ENCODE measurements at regions of chr1 and their contacts with region 1.

Region 1: DNA sequence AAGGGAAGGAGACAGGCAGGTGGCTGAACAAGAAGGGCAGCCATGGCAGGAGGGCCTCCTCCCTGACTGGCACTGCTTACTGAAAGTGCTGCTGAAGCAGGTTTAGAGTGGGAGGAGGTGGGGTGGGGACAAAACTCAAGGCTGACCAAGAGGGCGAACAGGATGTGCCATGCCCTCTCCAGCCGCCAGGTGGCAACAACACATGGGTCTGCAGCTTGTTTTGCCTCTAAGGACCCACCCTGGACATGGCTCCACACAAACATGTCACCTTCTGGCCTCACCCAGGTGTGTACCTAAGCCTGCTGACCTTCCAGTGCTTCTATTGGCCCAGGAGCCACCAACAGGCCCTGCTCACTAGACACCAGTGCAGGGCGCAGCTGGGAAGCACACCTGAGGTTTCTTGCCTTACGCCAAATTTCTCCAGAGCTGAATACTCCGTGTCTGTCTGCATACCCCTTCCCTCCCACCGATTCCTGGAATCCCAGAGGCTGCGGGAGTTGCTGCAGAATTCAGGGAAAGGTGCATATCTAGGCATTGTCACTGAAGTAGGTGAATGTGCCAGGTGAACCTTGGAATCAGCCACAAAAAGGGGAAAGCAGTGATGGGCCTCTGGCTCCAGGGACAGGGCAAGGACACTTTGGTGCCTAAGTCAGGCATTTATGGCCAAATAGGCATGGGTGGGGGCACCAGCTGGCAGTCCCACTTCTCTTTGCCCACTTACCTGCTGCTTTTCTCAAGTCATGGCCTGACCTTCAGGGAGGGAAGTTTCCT is 5.3 kb downstream of the PSRC1 start:
- DNase-seq: peak; percentile 64 to 76
- ATAC-seq: peak; percentile 16 to 60; a peak in 3 of 6 replicates
- H3K4me3 ChIP-seq: no peak overlapping the region
- H3K27ac ChIP-seq: peak overlapping the region; percentile 95 to 99
- H3K4me1 ChIP-seq: peaks cover 57% of the 10 kb centered on the region
- CTCF ChIP-seq: peak; percentile 69
- EP300 ChIP-seq: no peak
- POLR2A ChIP-seq: no peak
- RAD21 ChIP-seq: peak; percentile 56 to 67

Region 2: GRCh38 chr1:109025694-109026093 is 251.9 kb before region 1 on chr1:
- CTCF ChIA-PET with region 1: no interaction called
- POLR2A ChIA-PET with region 1: no interaction called
- DNase-seq: no peak
- ATAC-seq: no peak
- H3K4me3 ChIP-seq: no peak overlapping the region
- H3K27ac ChIP-seq: no peak overlapping the region
- H3K4me1 ChIP-seq: no peaks in the 10 kb centered on the region
- CTCF ChIP-seq: no peak
- EP300 ChIP-seq: no peak
- POLR2A ChIP-seq: no peak
- RAD21 ChIP-seq: no peak

Region 3: DNA sequence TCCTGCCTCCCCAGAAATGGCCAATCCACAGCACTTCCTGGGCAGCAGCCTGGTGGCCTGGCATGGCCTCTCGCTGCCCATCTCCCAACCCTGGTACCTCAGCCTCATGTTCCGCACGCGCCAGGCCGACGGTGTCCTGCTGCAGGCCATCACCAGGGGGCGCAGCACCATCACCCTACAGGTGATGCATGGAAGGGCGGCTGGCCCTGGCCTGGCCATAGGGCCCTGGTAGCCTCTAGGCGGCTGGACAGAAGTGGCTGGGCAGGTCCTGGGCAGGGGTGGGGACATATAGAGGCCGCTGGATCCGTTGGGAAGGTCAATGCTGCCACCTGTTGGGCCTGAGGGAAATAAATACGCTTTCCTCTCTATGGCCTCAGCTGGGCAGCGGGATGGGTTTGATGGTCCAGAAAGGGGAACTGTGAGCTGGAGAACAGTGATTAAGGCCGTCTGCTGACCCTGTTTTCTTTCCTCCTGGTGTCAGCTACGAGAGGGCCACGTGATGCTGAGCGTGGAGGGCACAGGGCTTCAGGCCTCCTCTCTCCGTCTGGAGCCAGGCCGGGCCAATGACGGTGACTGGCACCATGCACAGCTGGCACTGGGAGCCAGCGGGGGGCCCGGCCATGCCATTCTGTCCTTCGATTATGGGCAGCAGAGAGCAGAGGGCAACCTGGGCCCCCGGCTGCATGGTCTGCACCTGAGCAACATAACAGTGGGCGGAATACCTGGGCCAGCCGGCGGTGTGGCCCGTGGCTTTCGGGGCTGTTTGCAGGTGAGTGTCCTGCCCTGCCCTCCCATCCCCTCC is 13.8 kb before region 1 on chr1:
- CTCF ChIA-PET with region 1: interaction called, 31 read pairs
- POLR2A ChIA-PET with region 1: no interaction called
- DNase-seq: peak; percentile 85 to 95
- ATAC-seq: peak; percentile 92 to 99
- H3K4me3 ChIP-seq: no peak overlapping the region
- H3K27ac ChIP-seq: peak overlapping the region in 1 of 2 experiments; percentile 57; a peak in 2 of 6 replicates
- H3K4me1 ChIP-seq: no peaks in the 10 kb centered on the region; the same call in 2 of the 3 replicates
- CTCF ChIP-seq: peak; percentile 89
- EP300 ChIP-seq: no peak
- POLR2A ChIP-seq: no peak
- RAD21 ChIP-seq: peak; percentile 89 to 94

Region 4: DNA sequence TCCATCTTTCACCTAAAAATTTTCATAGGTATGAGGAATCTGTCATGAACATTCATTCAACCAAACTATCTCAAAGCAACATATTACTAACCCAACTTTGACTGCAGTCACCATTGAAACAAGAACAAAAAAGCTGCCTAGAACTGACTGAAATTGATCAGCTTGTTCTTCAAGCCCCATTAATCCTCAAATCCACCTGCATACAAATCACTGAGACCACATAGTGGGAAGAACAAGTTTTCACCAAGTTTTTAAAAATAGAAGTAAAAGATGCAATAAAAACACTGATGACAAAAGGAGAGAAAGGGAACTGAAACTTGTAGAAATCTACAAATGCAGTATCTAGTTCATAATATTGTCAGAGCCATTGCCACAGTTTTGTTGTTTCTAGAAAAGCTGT is 114.0 kb after region 1 on chr1:
- CTCF ChIA-PET with region 1: interaction called, 107 read pairs
- POLR2A ChIA-PET with region 1: interaction called, 3 read pairs
- DNase-seq: no peak
- ATAC-seq: no peak
- H3K4me3 ChIP-seq: no peak overlapping the region
- H3K27ac ChIP-seq: no peak overlapping the region
- H3K4me1 ChIP-seq: peaks cover 23% of the 10 kb centered on the region; the same call in 2 of the 3 replicates
- CTCF ChIP-seq: no peak
- EP300 ChIP-seq: no peak
- POLR2A ChIP-seq: no peak
- RAD21 ChIP-seq: no peak

Measured in A549 (cell line).